H1 (cell line): ENCODE measurements at regions of chr11 and their contacts with region 1.

Region 1: DNA sequence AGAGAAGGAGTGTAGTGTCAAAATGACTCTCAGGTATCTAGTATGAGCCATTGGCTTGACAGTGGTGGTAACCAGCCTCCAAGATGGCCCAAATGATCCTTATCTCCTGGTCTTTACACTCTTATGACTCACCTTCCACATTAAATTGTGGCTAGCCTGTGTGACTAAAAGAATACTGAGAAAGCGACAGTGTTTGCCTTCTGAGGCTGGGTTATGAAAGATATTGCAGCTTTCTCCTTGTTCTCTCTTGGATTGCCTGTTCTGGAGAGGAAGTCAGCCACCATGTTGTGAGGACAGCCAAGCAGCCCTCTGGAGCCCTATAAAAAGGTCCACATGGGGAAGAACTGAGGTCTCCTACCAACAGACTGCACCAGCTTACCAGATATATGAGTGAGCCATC is 15.8 kb downstream of the C11orf71 start:
- DNase-seq: no peak
- H3K4me3 ChIP-seq: no peak overlapping the region
- H3K27ac ChIP-seq: no peak overlapping the region
- H3K4me1 ChIP-seq: no peaks in the 10 kb centered on the region
- H3K27me3 ChIP-seq: no peaks in the 10 kb centered on the region
- CTCF ChIP-seq: no peak
- EP300 ChIP-seq: no peak
- POLR2A ChIP-seq: no peak
- RAD21 ChIP-seq: no peak

Region 2: GRCh38 chr11:114317787-114318137 is 66.7 kb before region 1 on chr11:
- CTCF ChIA-PET with region 1: no interaction called
- POLR2A ChIA-PET with region 1: no interaction called
- DNase-seq: peak in 1 of 2 experiments; percentile 58
- H3K4me3 ChIP-seq: peak overlapping the region in 1 of 4 experiments; percentile 32; a peak in 1 of 8 replicates
- H3K27ac ChIP-seq: no peak overlapping the region
- H3K4me1 ChIP-seq: peaks cover 2 to 24% (median 14%) of the 10 kb centered on the region in 4 experiments; a peak in 6 of 7 replicates
- H3K27me3 ChIP-seq: no peaks in the 10 kb centered on the region; a peak in 1 of 7 replicates
- CTCF ChIP-seq: peak; percentile 55 to 77 (median 68)
- EP300 ChIP-seq: no peak
- POLR2A ChIP-seq: no peak
- RAD21 ChIP-seq: peak; percentile 80 to 84

Region 3: GRCh38 chr11:114400217-114400914 is 15.9 kb after region 1 on chr11 and contains the starts of genes C11orf71 and RBM7:
- CTCF ChIA-PET with region 1: interaction called, 14 read pairs
- POLR2A ChIA-PET with region 1: interaction called, 5 read pairs
- DNase-seq: peak; percentile 95
- H3K4me3 ChIP-seq: peak within 1 kb of the TSS; percentile 83 to 94 (median 90)
- H3K27ac ChIP-seq: peak within 1 kb of the TSS; percentile 99
- H3K4me1 ChIP-seq: no peaks in the 10 kb centered on the region; a peak in 1 of 7 replicates
- H3K27me3 ChIP-seq: no peaks in the 10 kb centered on the region
- CTCF ChIP-seq: no peak
- EP300 ChIP-seq: no peak; a peak in 1 of 3 replicates
- POLR2A ChIP-seq: peak in 1 of 2 experiments; percentile 98; a peak in 2 of 3 replicates
- RAD21 ChIP-seq: peak in 1 of 2 experiments; percentile 5; a peak in 1 of 4 replicates
- total RNA-seq, gene C11orf71: 5.4 and 5.8 TPM in 2 replicates
- total RNA-seq, gene RBM7: 45.7 and 48.3 TPM in 2 replicates

Region 4: DNA sequence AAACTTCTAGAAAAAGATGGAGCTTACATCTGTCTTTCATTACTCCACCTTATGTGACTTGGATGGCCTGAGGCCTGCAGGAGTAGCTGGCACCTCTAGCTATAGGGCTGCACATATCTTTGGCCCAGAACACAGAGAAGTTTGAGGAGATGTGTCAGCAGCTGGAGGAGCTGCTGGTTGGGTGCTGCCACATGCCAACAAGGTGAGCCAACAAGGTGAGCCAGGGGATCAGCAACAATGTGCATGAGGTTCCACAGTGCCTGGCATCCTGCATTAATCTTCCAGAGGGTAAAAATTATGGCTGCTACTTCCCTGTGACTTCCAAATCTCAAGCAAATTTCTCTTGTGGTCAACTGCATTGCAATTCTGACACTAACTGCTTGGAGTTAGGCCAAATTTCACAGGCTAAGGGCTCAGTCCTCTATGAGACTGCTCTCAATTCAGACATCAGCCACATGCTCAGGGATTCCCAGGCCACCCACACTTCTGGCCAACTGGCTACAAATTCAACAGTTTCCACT is 32.0 kb after region 1 on chr11:
- CTCF ChIA-PET with region 1: no interaction called
- POLR2A ChIA-PET with region 1: no interaction called
- DNase-seq: no peak
- H3K4me3 ChIP-seq: no peak overlapping the region
- H3K27ac ChIP-seq: no peak overlapping the region
- H3K4me1 ChIP-seq: peaks cover 0 to 3% (median 2%) of the 10 kb centered on the region in 4 experiments; a peak in 5 of 7 replicates
- H3K27me3 ChIP-seq: no peaks in the 10 kb centered on the region
- CTCF ChIP-seq: no peak
- EP300 ChIP-seq: no peak
- POLR2A ChIP-seq: no peak
- RAD21 ChIP-seq: no peak

Region 5: DNA sequence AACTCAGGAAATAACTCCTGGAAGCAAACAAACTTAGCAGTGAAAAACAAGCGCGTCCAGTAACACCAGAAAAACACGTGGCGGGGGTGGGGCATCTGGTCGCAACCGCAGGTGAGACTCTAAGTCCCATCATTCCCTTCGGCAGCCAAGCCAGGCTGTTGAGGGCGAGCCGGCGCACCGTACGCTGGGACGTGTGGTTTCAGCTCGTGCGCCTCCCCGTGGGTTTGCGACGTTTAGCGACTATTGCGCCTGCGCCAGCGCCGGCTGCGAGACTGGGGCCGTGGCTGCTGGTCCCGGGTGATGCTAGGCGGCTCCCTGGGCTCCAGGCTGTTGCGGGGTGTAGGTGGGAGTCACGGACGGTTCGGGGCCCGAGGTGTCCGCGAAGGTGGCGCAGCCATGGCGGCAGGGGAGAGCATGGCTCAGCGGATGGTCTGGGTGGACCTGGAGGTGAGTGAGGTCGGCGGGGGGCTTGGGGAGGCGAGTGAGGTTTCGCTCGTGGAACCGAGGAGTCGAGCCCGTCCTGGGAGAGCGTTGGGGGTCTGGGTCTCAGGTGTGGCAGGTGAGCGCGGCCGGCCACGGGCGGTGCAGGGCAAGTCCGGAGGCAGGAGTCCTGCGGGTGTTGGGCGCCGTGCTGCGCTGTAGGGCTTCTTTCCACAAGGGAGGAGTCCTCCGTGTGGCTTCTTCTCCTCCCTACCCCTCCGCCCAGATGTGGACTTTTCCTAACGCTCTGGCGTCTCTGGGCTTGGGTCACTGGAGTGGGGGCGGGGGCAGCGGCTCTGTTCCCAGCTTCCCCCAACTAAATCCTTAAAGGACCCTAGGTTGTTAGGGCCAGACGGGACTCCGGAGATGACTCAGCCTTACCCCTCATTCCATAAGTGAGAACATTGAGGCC is 55.0 kb after region 1 on chr11 and contains the start of gene REXO2:
- CTCF ChIA-PET with region 1: no interaction called
- POLR2A ChIA-PET with region 1: no interaction called
- DNase-seq: peak; percentile 81 to 90
- H3K4me3 ChIP-seq: peak within 1 kb of the TSS; percentile 90 to 99 (median 96)
- H3K27ac ChIP-seq: peak within 1 kb of the TSS; percentile 77
- H3K4me1 ChIP-seq: peaks cover 2 to 12% (median 7%) of the 10 kb centered on the region in 4 experiments; a peak in 6 of 7 replicates
- H3K27me3 ChIP-seq: no peaks in the 10 kb centered on the region
- CTCF ChIP-seq: peak in 2 of 3 experiments; percentile 22 to 27; a peak in 2 of 4 replicates
- EP300 ChIP-seq: no peak
- POLR2A ChIP-seq: peak; percentile 51 to 72; a peak in 2 of 3 replicates
- RAD21 ChIP-seq: no peak
- total RNA-seq, gene REXO2: 109 and 111 TPM in 2 replicates

Region 6: GRCh38 chr11:114511538-114511937 is 127.1 kb after region 1 on chr11:
- CTCF ChIA-PET with region 1: no interaction called
- POLR2A ChIA-PET with region 1: no interaction called
- DNase-seq: no peak
- H3K4me3 ChIP-seq: no peak overlapping the region
- H3K27ac ChIP-seq: no peak overlapping the region
- H3K4me1 ChIP-seq: no peaks in the 10 kb centered on the region
- H3K27me3 ChIP-seq: no peaks in the 10 kb centered on the region
- CTCF ChIP-seq: peak in 1 of 3 experiments; percentile 10; a peak in 1 of 4 replicates
- EP300 ChIP-seq: no peak
- POLR2A ChIP-seq: no peak
- RAD21 ChIP-seq: peak in 1 of 2 experiments; percentile 21; a peak in 1 of 4 replicates